Mammary epithelial cell (primary cell): ENCODE measurements at regions of chr1 and their contacts with region 1.

Region 1: DNA sequence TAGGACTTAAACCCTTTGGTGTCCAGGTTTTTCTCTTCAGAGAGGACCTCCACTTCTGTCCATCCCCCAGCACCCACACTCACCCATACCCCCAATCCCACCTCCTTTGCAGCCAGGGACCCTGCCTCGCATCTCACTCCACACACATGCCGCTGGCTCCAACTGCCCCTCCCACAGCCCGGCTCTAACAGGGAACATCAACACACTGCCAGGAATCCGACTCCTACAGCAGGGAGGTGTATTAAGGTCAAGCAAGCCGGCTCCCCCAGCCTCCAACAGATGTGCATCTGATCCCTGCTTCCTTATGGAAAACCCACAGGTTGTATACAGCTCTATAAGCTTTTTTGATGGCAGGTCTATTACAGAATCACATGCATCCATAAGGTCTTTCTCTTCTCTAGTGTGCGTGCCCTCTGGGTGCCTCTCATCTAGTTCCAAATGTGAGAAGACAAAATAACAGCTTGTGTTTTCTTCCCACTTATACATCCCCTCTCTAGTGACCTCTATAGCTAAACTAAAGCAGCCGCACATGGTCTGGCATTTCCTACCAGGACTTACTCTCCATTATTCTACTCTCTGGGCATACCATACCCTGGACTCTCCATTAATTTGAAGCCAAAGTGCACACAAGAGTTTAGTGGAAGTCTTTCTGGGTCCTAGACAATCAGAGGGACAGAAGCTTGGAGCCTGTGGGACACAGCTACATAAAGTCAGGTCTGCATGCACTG is 16.3 kb downstream of the PIK3C2B start:
- DNase-seq: no peak
- H3K4me3 ChIP-seq: no peak overlapping the region
- H3K27ac ChIP-seq: no peak overlapping the region
- H3K4me1 ChIP-seq: peaks cover 23% of the 10 kb centered on the region
- H3K27me3 ChIP-seq: no peaks in the 10 kb centered on the region
- CTCF ChIP-seq: no peak

Region 2: GRCh38 chr1:204446370-204447111 is 31.8 kb before region 1 on chr1:
- CTCF ChIA-PET with region 1: no interaction called
- dilution Hi-C with region 1: no loop called
- in situ Hi-C with region 1: no loop called
- intact Hi-C with region 1: loop called (anchors 2 kb)
- DNase-seq: no peak
- H3K4me3 ChIP-seq: no peak overlapping the region
- H3K27ac ChIP-seq: no peak overlapping the region
- H3K4me1 ChIP-seq: peaks cover 32% of the 10 kb centered on the region
- H3K27me3 ChIP-seq: no peaks in the 10 kb centered on the region
- CTCF ChIP-seq: peak; percentile 39 to 57